ENCODE measurements at regions of chr20 and their contacts with region 1.

Region 1: DNA sequence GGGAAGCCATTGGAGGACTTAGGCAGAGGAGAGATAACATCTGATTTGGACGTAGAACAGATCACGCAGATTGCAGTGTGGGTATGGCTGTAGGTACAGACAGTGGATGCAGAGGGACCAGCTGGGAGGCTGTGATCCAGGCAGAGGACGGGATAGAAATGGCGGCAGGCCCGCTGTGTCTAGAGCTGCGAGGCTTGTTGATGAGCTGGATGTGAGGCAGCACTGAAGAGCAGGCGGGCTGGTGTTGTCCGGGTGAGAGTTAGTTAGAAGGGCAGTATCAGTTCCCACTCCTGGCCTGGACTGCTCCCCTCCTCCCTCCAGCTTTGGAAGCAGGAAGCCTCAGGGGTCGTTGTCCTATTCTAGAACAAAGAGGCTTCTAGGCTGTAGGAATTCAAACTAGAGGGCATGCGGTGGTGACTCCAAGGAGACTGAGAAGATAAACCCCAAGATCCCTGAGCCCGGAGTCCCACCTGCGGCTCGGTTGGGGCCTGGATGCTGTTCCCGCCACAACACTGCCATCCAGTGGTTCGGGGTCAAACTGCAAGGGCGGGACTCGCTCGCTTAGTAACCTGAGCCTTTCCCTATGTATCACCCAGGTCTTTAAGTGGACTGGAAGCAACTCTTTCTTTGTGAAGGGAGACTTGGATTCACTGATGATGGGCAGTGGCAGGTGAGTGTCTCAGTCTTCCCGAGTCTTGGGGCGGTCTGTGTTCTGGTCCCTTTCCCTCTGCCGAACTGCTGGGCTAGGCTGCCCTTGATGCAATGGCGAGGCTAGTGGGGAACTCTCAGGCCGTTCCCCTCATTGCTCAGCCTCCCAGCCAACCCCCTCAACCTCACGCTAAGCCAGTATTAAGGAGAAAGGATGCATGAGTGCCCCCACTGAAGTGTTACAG is 11.2 kb downstream of the TLDC2 start:
- DNase-seq: peak; percentile 65
- H3K4me3 Mint-ChIP-seq: no peak overlapping the region
- H3K27ac Mint-ChIP-seq: peak overlapping the region; percentile 0
- H3K4me1 Mint-ChIP-seq: peaks cover 17% of the 10 kb centered on the region
- H3K27me3 Mint-ChIP-seq: no peaks in the 10 kb centered on the region

Region 2: GRCh38 chr20:36666181-36666740 is 220.8 kb before region 1 on chr20:
- intact Hi-C with region 1: loop called (anchors 1 kb)
- DNase-seq: no peak
- H3K4me3 Mint-ChIP-seq: no peak overlapping the region
- H3K27ac Mint-ChIP-seq: no peak overlapping the region
- H3K4me1 Mint-ChIP-seq: peaks cover under 1% of the 10 kb centered on the region
- H3K27me3 Mint-ChIP-seq: no peaks in the 10 kb centered on the region

Region 3: DNA sequence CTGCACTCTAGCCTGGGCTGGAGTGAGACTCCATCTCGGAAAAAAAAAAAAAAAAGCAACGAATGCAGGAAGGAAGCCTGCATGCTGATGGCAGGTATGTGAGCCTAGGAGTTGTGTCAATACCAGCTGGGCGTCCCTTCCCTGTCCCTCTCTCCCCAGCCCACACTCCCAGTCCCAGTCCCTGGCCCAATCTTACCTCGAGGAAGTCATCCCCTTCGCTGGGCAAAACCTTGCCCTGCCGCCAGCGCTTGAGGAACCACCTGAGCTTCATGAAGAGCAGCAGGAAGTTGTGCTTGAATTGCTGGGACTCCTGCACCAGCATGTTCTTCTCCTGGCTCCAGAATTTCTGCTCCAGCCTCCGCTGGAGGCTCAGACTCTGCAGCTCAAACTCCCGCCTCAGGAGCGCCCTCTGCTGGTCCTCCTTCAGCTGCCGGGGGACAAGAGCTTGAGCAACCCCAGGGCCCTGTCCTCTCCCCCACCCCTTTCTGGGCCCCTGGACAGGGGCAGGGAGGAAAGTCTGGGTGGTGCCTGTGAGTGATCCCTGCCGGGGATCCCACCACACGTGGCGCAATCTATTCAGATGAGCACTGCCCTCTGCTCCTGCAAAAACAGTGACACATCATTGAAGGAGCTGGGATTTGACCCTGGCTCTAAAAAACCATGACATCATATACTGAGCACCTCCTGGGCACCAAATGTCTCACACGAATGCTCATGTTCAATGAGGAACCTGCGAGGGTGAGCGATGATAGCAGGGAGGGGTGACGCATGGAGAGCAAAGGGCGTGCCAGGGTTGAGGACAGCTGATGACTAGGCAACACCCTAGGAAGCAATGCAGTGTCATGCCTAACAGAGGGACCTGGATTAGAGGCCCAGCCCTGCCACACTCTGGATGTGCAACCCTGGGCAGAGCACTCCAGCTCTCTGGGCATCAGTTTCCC is 78.5 kb before region 1 on chr20:
- intact Hi-C with region 1: loop called (anchors 1 kb)
- DNase-seq: peak; percentile 44
- H3K4me3 Mint-ChIP-seq: no peak overlapping the region
- H3K27ac Mint-ChIP-seq: no peak overlapping the region
- H3K4me1 Mint-ChIP-seq: no peaks in the 10 kb centered on the region
- H3K27me3 Mint-ChIP-seq: no peaks in the 10 kb centered on the region

Region 4: GRCh38 chr20:36835453-36836198 is 51.5 kb before region 1 on chr20:
- intact Hi-C with region 1: loop called (anchors 2 kb)
- DNase-seq: peak; percentile 84
- H3K4me3 Mint-ChIP-seq: peak overlapping the region; percentile 81
- H3K27ac Mint-ChIP-seq: peak overlapping the region; percentile 89
- H3K4me1 Mint-ChIP-seq: peaks cover 26% of the 10 kb centered on the region
- H3K27me3 Mint-ChIP-seq: peaks cover 2% of the 10 kb centered on the region

Measured in activated T-helper 1 cell treated with anti-CD3 and anti-CD28 coated beads, Interleukin-12 subunit alpha, Interleukin-12 subunit beta, Interleukin-2, Interleukin-4 antibody, amounts not matched to agents 30 ng/mL and 10 ng/mL and 1 ng/mL, durations not matched to agents 14 hours and 24 hours and 36 hours (primary cell).